K562 (cell line): ENCODE measurements at regions of chr3 and their contacts with region 1.

Region 1: DNA sequence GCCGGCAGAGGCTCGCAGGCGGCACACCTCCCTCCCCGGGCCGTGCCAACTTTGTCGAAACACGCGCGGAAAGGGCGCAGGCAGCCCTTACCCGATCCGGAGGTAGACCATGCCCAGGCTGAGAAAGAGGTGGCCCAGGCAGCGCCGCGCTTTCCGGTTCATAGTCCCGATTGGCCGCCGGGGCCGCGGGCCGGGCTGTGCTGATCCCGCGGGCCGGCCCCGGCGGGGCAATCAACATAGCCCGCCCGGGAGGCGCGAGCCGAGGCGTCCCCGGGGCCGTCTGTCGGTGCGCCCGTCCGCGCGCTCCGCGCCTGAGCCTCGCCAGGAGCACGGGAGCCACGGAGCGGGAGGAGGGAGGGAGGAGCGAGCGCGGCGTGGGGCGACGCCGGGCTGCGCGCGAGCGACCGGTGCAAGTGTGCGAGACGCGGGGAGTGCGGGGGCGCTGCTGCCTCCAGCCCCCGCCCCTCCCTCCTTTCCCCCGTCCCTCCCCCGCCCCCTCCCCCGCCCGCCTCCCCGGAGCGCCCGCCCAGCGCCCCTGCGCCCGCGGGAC is at the start of gene WNT7A:
- DNase-seq: peak in 3 of 4 experiments; percentile 18 to 66 (median 62)
- ATAC-seq: peak; percentile 13; the same call in 1 of the 3 replicates
- H3K4me3 ChIP-seq: no peak within 1 kb of the TSS; the same call in 1 of the 2 replicates
- H3K27ac ChIP-seq: no peak within 1 kb of the TSS
- H3K4me1 ChIP-seq: peaks cover 0 to 32% of the 10 kb centered on the region in 2 experiments; a peak in 2 of 5 replicates
- H3K27me3 ChIP-seq: peaks cover 39 to 72% of the 10 kb centered on the region in 2 experiments
- CTCF ChIP-seq: no peak
- EP300 ChIP-seq: no peak
- POLR2A ChIP-seq: no peak
- RAD21 ChIP-seq: no peak
- polyA plus RNA-seq, gene WNT7A: not detected

Region 2: DNA sequence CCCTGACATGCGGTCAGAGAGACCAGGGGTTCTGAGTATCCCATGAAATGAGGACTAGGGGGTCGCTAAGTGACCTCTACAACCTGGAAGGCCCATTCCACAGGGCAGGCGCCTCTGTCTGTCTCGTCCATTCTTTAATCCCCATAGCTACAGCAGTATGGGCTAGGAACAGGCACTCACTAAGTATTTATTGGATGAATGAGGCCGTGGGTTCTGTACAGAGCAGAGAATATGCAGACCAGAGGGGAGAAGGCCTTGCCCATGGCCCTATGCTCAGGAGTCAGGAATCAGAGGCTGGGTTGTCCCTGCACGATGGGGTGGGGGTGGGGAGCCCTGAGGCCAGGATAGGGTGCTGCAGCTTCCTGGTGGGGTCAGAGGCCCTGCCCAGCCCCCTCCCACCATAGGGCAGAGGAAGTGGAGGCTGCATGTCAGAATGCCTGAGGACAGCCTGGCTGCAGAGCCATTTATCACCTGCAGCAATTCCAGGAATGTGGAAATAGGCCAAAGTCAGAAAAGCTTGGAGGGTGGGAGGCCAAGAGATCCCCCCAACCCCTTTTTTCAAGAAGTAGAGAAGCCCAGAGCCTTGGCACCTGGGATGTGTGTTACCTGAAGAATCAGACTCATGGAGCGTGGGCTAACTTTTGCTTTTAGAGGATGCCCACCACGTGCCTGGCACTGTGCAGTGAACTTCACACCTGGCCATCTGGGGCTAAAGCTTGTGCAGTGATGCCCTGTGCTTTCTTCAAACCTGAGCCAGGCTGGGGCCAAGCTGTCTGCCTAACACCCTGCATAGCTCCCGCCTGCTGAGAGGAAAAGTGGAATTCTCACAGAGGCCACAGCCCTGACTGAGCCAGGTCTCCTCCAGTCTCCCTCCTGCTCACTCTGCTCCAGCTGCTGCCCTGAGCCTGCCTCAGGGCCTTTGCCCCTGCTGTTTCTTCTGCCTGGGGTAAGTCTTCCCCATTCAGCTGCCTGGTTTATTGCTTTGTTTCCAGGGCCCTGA is 109.3 kb before region 1 on chr3:
- CTCF ChIA-PET with region 1: no interaction called
- POLR2A ChIA-PET with region 1: no interaction called
- in situ Hi-C with region 1: no loop called
- intact Hi-C with region 1: loop called (anchors 10 kb)
- DNase-seq: no peak
- ATAC-seq: peak; percentile 36
- H3K4me3 ChIP-seq: no peak overlapping the region
- H3K27ac ChIP-seq: no peak overlapping the region
- H3K4me1 ChIP-seq: no peaks in the 10 kb centered on the region
- H3K27me3 ChIP-seq: peaks cover 4 to 66% of the 10 kb centered on the region in 2 experiments; a peak in 4 of 5 replicates
- CTCF ChIP-seq: no peak
- EP300 ChIP-seq: no peak
- POLR2A ChIP-seq: no peak
- RAD21 ChIP-seq: no peak

Region 3: DNA sequence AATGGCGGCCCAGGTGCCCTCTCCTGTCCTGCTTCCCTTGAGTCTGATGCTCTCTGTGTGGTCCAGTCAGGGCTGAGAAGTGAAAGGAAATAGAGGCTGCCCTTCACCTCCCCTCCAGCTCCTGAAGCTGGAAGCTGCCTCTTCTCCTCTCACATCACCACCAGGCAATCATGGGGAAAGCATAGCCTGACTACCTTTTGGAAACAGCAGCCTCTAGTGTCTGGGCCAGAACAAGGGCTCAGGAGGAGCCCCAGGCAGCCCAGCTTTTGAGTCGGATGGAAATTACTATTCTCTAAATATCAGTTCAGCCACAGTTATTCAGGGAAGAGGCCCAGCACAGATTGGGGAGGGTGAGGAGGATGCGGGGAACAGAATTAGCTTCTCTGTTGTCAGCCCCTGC is 728.6 kb after region 1 on chr3:
- CTCF ChIA-PET with region 1: no interaction called
- POLR2A ChIA-PET with region 1: no interaction called
- in situ Hi-C with region 1: no loop called
- intact Hi-C with region 1: no loop called
- DNase-seq: no peak
- ATAC-seq: peak; percentile 59
- H3K4me3 ChIP-seq: no peak overlapping the region
- H3K27ac ChIP-seq: no peak overlapping the region
- H3K4me1 ChIP-seq: no peaks in the 10 kb centered on the region
- H3K27me3 ChIP-seq: peaks cover 5 to 33% of the 10 kb centered on the region in 2 experiments; a peak in 4 of 5 replicates
- CTCF ChIP-seq: peak; percentile 12 to 33 (median 25); a peak in 1 of 6 replicates
- EP300 ChIP-seq: no peak
- POLR2A ChIP-seq: no peak
- RAD21 ChIP-seq: peak in 1 of 2 experiments; percentile 36; a peak in 1 of 4 replicates